GM12878 (cell line): ENCODE measurements at regions of chr6 and their contacts with region 1.

Region 1: DNA sequence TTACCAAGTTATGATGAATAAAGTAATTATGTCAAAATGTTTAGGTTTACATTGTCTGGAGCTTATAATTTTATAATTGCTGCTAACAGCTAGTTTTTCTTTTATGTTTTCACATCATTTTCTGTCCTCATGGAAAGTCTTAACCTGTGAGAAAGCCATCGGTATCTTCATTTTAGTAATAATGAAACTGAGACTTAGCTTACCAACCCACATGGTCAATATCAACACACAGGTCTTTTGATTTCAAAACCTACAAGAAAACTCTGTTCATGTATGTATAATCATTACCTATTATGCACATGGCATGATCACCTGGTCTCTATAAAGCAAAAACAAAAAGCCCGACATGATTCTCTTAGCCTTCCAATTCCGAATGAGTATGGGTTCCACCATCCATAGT is 61.9 kb downstream of the KCNQ5 start:
- DNase-seq: peak; percentile 65
- ATAC-seq: peak; percentile 88
- H3K4me3 ChIP-seq: peak overlapping the region; percentile 48; the same call in 1 of the 2 replicates
- H3K27ac ChIP-seq: peak overlapping the region; percentile 89
- H3K4me1 ChIP-seq: peaks cover 19% of the 10 kb centered on the region
- H3K27me3 ChIP-seq: no peaks in the 10 kb centered on the region
- CTCF ChIP-seq: no peak
- EP300 ChIP-seq: peak; percentile 91 to 94
- POLR2A ChIP-seq: no peak
- RAD21 ChIP-seq: no peak

Region 2: DNA sequence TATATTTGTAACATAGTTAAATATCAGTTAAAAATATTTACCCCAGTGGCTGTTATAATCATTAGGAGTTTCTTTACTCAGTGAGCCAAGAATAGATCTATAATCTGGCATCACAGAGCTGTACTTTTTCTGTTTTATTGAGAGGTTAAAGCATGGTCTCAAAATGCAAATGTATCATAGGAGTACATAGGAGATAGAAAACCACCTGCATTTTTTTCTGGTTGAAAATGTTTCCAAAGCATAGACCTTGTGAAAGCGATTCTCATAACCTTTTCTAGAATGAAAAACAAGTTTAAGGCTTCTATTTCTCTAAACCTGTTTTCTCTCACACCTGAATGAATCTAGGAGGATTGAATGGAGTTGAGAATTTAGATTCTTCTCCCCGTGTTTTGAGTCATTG is 47.6 kb before region 1 on chr6:
- CTCF ChIA-PET with region 1: interaction called, 14 read pairs
- POLR2A ChIA-PET with region 1: interaction called, 8 read pairs
- RAD21 ChIA-PET with region 1: interaction called, 29 read pairs
- SMC1A ChIA-PET with region 1: interaction called, 163 read pairs
- in situ Hi-C with region 1: no loop called
- intact Hi-C with region 1: no loop called
- DNase-seq: peak; percentile 60
- ATAC-seq: peak; percentile 83
- H3K4me3 ChIP-seq: peak overlapping the region; percentile 1; the same call in 1 of the 2 replicates
- H3K27ac ChIP-seq: peak overlapping the region; percentile 21
- H3K4me1 ChIP-seq: peaks cover 14% of the 10 kb centered on the region
- H3K27me3 ChIP-seq: no peaks in the 10 kb centered on the region
- CTCF ChIP-seq: no peak
- EP300 ChIP-seq: peak in 1 of 2 experiments; percentile 43; a peak in 1 of 4 replicates
- POLR2A ChIP-seq: no peak
- RAD21 ChIP-seq: no peak

Region 3: DNA sequence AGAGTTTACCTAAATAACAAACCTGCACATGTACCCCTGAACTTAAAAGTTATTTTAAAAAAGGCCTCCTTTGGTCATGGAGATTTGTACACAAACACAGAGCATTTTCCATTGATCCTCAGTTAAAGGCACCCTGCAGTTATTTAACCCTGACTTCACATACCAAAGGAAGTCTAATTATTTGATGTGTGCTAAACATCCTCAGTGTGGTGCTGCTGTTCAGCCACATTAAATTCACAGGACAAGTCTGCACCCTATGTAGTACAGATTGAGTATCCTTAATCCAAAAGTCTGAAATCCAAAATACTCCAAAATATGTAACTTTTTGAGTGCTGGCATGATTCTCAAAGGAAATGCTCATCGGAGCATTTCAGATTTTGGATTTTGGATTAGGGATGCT is 40.6 kb before region 1 on chr6:
- CTCF ChIA-PET with region 1: interaction called, 5 read pairs
- POLR2A ChIA-PET with region 1: interaction called, 9 read pairs
- RAD21 ChIA-PET with region 1: interaction called, 50 read pairs
- SMC1A ChIA-PET with region 1: interaction called, 163 read pairs
- in situ Hi-C with region 1: no loop called
- intact Hi-C with region 1: loop called (anchors 2 kb)
- DNase-seq: no peak
- ATAC-seq: peak; percentile 30; the same call in 1 of the 3 replicates
- H3K4me3 ChIP-seq: no peak overlapping the region
- H3K27ac ChIP-seq: no peak overlapping the region
- H3K4me1 ChIP-seq: peaks cover 4% of the 10 kb centered on the region; the same call in 1 of the 2 replicates
- H3K27me3 ChIP-seq: no peaks in the 10 kb centered on the region
- CTCF ChIP-seq: peak in 2 of 3 experiments; percentile 13 to 50; a peak in 3 of 6 replicates
- EP300 ChIP-seq: no peak
- POLR2A ChIP-seq: no peak
- RAD21 ChIP-seq: peak; percentile 57

Region 4: GRCh38 chr6:72649032-72649984 is 34.5 kb before region 1 on chr6:
- CTCF ChIA-PET with region 1: interaction called, 12 read pairs
- POLR2A ChIA-PET with region 1: interaction called, 21 read pairs
- RAD21 ChIA-PET with region 1: interaction called, 50 read pairs
- SMC1A ChIA-PET with region 1: interaction called, 163 read pairs
- in situ Hi-C with region 1: no loop called
- intact Hi-C with region 1: loop called (anchors 2 kb)
- DNase-seq: peak; percentile 58
- ATAC-seq: peak; percentile 71
- H3K4me3 ChIP-seq: peak overlapping the region; percentile 4; the same call in 1 of the 2 replicates
- H3K27ac ChIP-seq: peak overlapping the region; percentile 77
- H3K4me1 ChIP-seq: peaks cover 25% of the 10 kb centered on the region
- H3K27me3 ChIP-seq: no peaks in the 10 kb centered on the region
- CTCF ChIP-seq: no peak
- EP300 ChIP-seq: peak; percentile 66 to 82; a peak in 3 of 4 replicates
- POLR2A ChIP-seq: 0 out of 2 replicates have a peak, but pooled peaks have one; percentile 25
- RAD21 ChIP-seq: no peak

Region 5: DNA sequence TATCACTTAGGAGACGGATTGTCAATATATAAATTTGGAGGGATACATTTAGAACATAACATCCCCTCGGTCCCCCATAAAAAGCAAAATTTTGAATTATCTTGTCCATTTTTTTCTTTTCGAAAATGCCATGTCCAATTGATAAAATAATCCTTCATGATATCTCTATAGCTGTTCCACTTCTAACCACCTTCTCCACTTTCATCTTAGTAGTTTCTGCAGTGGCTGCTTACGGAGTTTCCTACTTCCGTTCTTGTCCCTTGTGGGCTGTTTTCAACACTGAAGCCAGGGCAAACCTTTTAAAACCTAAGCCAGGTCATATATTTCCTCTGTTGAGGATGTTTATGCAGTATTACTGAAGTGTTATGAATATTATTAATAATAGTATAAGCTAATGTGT is 24.0 kb before region 1 on chr6:
- CTCF ChIA-PET with region 1: interaction called, 6 read pairs
- POLR2A ChIA-PET with region 1: interaction called, 4 read pairs
- RAD21 ChIA-PET with region 1: interaction called, 21 read pairs
- SMC1A ChIA-PET with region 1: interaction called, 19 read pairs
- in situ Hi-C with region 1: no loop called
- intact Hi-C with region 1: no loop called
- DNase-seq: no peak
- ATAC-seq: no peak
- H3K4me3 ChIP-seq: no peak overlapping the region
- H3K27ac ChIP-seq: no peak overlapping the region
- H3K4me1 ChIP-seq: no peaks in the 10 kb centered on the region
- H3K27me3 ChIP-seq: no peaks in the 10 kb centered on the region
- CTCF ChIP-seq: no peak
- EP300 ChIP-seq: no peak
- POLR2A ChIP-seq: no peak
- RAD21 ChIP-seq: no peak

Region 6: GRCh38 chr6:72699159-72699558 is 15.4 kb after region 1 on chr6:
- CTCF ChIA-PET with region 1: interaction called, 9 read pairs
- POLR2A ChIA-PET with region 1: interaction called, 6 read pairs
- RAD21 ChIA-PET with region 1: interaction called, 9 read pairs
- SMC1A ChIA-PET with region 1: interaction called, 22 read pairs
- in situ Hi-C with region 1: no loop called
- intact Hi-C with region 1: no loop called
- DNase-seq: no peak
- ATAC-seq: peak; percentile 75
- H3K4me3 ChIP-seq: no peak overlapping the region
- H3K27ac ChIP-seq: no peak overlapping the region
- H3K4me1 ChIP-seq: no peaks in the 10 kb centered on the region
- H3K27me3 ChIP-seq: no peaks in the 10 kb centered on the region
- CTCF ChIP-seq: no peak
- EP300 ChIP-seq: no peak
- POLR2A ChIP-seq: no peak
- RAD21 ChIP-seq: no peak

Region 7: GRCh38 chr6:72740135-72740534 is 56.3 kb after region 1 on chr6:
- CTCF ChIA-PET with region 1: interaction called, 4 read pairs
- POLR2A ChIA-PET with region 1: interaction called, 5 read pairs
- RAD21 ChIA-PET with region 1: interaction called, 29 read pairs
- SMC1A ChIA-PET with region 1: interaction called, 27 read pairs
- in situ Hi-C with region 1: no loop called
- intact Hi-C with region 1: loop called (anchors 2 kb)
- DNase-seq: peak; percentile 90
- ATAC-seq: peak; percentile 94
- H3K4me3 ChIP-seq: peak overlapping the region; percentile 50; the same call in 1 of the 2 replicates
- H3K27ac ChIP-seq: peak overlapping the region; percentile 82
- H3K4me1 ChIP-seq: peaks cover 24% of the 10 kb centered on the region
- H3K27me3 ChIP-seq: no peaks in the 10 kb centered on the region
- CTCF ChIP-seq: no peak
- EP300 ChIP-seq: peak; percentile 79 to 94
- POLR2A ChIP-seq: no peak
- RAD21 ChIP-seq: 0 out of 2 replicates have a peak, but pooled peaks have one; percentile 14

Region 8: GRCh38 chr6:73169111-73169510 is 485.3 kb after region 1 on chr6:
- CTCF ChIA-PET with region 1: no interaction called
- POLR2A ChIA-PET with region 1: no interaction called
- RAD21 ChIA-PET with region 1: no interaction called
- SMC1A ChIA-PET with region 1: no interaction called
- in situ Hi-C with region 1: no loop called
- intact Hi-C with region 1: no loop called
- DNase-seq: no peak
- ATAC-seq: no peak
- H3K4me3 ChIP-seq: no peak overlapping the region
- H3K27ac ChIP-seq: no peak overlapping the region
- H3K4me1 ChIP-seq: no peaks in the 10 kb centered on the region
- H3K27me3 ChIP-seq: no peaks in the 10 kb centered on the region
- CTCF ChIP-seq: no peak
- EP300 ChIP-seq: no peak
- POLR2A ChIP-seq: no peak
- RAD21 ChIP-seq: no peak

Region 9: GRCh38 chr6:73491377-73491776 is 807.6 kb after region 1 on chr6:
- CTCF ChIA-PET with region 1: no interaction called
- POLR2A ChIA-PET with region 1: no interaction called
- RAD21 ChIA-PET with region 1: no interaction called
- SMC1A ChIA-PET with region 1: no interaction called
- in situ Hi-C with region 1: no loop called
- intact Hi-C with region 1: no loop called
- DNase-seq: no peak
- ATAC-seq: no peak
- H3K4me3 ChIP-seq: no peak overlapping the region
- H3K27ac ChIP-seq: no peak overlapping the region
- H3K4me1 ChIP-seq: no peaks in the 10 kb centered on the region
- H3K27me3 ChIP-seq: no peaks in the 10 kb centered on the region
- CTCF ChIP-seq: no peak
- EP300 ChIP-seq: no peak
- POLR2A ChIP-seq: no peak
- RAD21 ChIP-seq: no peak

Region 10: GRCh38 chr6:73610444-73611275 is 926.9 kb after region 1 on chr6:
- CTCF ChIA-PET with region 1: no interaction called
- POLR2A ChIA-PET with region 1: no interaction called
- RAD21 ChIA-PET with region 1: no interaction called
- SMC1A ChIA-PET with region 1: no interaction called
- in situ Hi-C with region 1: no loop called
- intact Hi-C with region 1: no loop called
- DNase-seq: peak; percentile 23
- ATAC-seq: peak; percentile 79
- H3K4me3 ChIP-seq: no peak overlapping the region
- H3K27ac ChIP-seq: no peak overlapping the region
- H3K4me1 ChIP-seq: no peaks in the 10 kb centered on the region
- H3K27me3 ChIP-seq: no peaks in the 10 kb centered on the region
- CTCF ChIP-seq: peak; percentile 37 to 66 (median 58); a peak in 5 of 6 replicates
- EP300 ChIP-seq: no peak
- POLR2A ChIP-seq: no peak
- RAD21 ChIP-seq: peak; percentile 74